K562 (cell line): ENCODE measurements at regions of chr19 and their contacts with region 1.

Region 1: DNA sequence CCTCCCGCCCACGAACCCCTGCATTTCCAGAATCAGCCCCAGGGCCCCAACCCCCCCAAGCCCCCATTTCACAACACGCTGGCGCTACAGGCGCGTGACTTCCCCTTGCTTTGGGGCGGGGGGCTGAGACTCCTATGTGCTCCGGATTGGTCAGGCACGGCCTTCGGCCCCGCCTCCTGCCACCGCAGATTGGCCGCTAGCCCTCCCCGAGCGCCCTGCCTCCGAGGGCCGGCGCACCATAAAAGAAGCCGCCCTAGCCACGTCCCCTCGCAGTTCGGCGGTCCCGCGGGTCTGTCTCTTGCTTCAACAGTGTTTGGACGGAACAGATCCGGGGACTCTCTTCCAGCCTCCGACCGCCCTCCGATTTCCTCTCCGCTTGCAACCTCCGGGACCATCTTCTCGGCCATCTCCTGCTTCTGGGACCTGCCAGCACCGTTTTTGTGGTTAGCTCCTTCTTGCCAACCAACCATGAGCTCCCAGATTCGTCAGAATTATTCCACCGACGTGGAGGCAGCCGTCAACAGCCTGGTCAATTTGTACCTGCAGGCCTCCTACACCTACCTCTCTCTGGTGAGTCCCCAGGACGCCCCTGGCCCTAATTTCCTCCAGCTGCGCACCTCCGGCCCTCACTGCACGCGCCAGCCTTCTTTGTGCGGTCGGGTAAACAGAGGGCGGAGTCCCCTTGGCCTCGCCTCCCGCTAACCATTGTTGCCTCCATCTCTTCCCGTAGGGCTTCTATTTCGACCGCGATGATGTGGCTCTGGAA is at the start of gene FTL:
- DNase-seq: peak; percentile 89 to 99 (median 94)
- ATAC-seq: peak; percentile 72
- H3K4me3 ChIP-seq: peak within 1 kb of the TSS; percentile 70
- H3K27ac ChIP-seq: peak within 1 kb of the TSS; percentile 99
- H3K4me1 ChIP-seq: peaks cover 38 to 66% of the 10 kb centered on the region in 2 experiments
- H3K27me3 ChIP-seq: no peaks in the 10 kb centered on the region
- CTCF ChIP-seq: no peak
- EP300 ChIP-seq: peak; percentile 36; the same call in 1 of the 2 replicates
- POLR2A ChIP-seq: peak; percentile 100
- RAD21 ChIP-seq: peak in 1 of 2 experiments; percentile 21; a peak in 2 of 4 replicates
- polyA plus RNA-seq, gene FTL: 17,458 to 27,415 TPM

Region 2: GRCh38 chr19:48853483-48853882 is 111.7 kb before region 1 on chr19:
- CTCF ChIA-PET with region 1: no interaction called
- POLR2A ChIA-PET with region 1: interaction called, 16 read pairs
- in situ Hi-C with region 1: no loop called
- intact Hi-C with region 1: no loop called
- DNase-seq: no peak
- ATAC-seq: no peak
- H3K4me3 ChIP-seq: no peak overlapping the region
- H3K27ac ChIP-seq: no peak overlapping the region
- H3K4me1 ChIP-seq: peaks cover 21 to 26% of the 10 kb centered on the region in 2 experiments
- H3K27me3 ChIP-seq: no peaks in the 10 kb centered on the region
- CTCF ChIP-seq: no peak
- EP300 ChIP-seq: no peak
- POLR2A ChIP-seq: no peak
- RAD21 ChIP-seq: no peak

Region 3: DNA sequence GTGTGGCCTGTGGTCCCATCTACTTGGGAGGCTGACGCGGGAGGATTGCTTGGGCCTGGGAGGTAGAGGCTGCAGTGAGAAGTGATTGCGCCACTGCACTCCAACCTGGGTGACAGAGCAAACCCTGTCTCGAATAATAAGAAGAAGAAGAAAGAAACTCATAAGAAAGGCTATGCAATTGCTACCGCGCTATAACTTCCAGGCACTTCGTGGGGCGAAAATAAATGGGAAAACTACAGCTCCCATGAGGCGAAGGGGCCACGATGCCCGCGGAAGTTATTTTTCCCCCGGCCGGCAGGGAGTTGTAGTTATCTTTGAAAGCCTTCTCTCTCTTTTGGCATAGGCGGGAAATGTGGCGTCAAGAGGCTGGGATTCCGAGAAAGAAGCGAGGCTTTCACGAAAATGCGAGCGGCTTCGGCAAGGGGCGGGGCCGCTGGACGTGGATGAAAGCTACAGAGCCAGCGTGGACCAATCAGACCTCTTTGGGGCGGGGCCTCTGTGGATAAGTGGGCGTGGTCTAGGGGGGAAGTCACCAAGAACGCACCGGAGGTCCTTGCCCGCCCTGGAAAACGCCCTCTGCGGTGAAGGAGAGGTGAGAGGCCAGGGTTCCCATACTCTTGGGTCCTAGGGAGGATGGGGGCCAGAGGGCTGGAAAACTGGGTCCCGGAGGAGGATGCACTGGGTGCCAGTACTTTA is 65.3 kb before region 1 on chr19 and contains the start of gene NUCB1:
- CTCF ChIA-PET with region 1: interaction called, 3 read pairs
- POLR2A ChIA-PET with region 1: interaction called, 97 read pairs
- in situ Hi-C with region 1: no loop called
- intact Hi-C with region 1: loop called (anchors 2 kb)
- DNase-seq: peak; percentile 98 to 100 (median 98)
- ATAC-seq: peak; percentile 87
- H3K4me3 ChIP-seq: peak within 1 kb of the TSS; percentile 89
- H3K27ac ChIP-seq: peak within 1 kb of the TSS; percentile 77
- H3K4me1 ChIP-seq: peaks cover 27 to 69% of the 10 kb centered on the region in 2 experiments
- H3K27me3 ChIP-seq: no peaks in the 10 kb centered on the region
- CTCF ChIP-seq: peak; percentile 16 to 52 (median 45); a peak in 3 of 6 replicates
- EP300 ChIP-seq: peak; percentile 73
- POLR2A ChIP-seq: peak; percentile 75
- RAD21 ChIP-seq: peak; percentile 26 to 42
- polyA plus RNA-seq, gene NUCB1: 3.1 to 5.3 TPM

Region 4: GRCh38 chr19:48933382-48933932 is 31.8 kb before region 1 on chr19 and contains the start of gene DHDH:
- CTCF ChIA-PET with region 1: no interaction called
- POLR2A ChIA-PET with region 1: interaction called, 32 read pairs
- in situ Hi-C with region 1: no loop called
- intact Hi-C with region 1: loop called (anchors 5 kb)
- DNase-seq: peak; percentile 91 to 96 (median 95)
- ATAC-seq: peak; percentile 97
- H3K4me3 ChIP-seq: peak within 1 kb of the TSS; percentile 38
- H3K27ac ChIP-seq: peak within 1 kb of the TSS; percentile 29; the same call in 2 of the 3 replicates
- H3K4me1 ChIP-seq: peaks cover 14 to 38% of the 10 kb centered on the region in 2 experiments; a peak in 4 of 5 replicates
- H3K27me3 ChIP-seq: no peaks in the 10 kb centered on the region
- CTCF ChIP-seq: no peak
- EP300 ChIP-seq: no peak
- POLR2A ChIP-seq: peak; percentile 63
- RAD21 ChIP-seq: no peak
- polyA plus RNA-seq, gene DHDH: 0.41 to 0.87 TPM

Region 5: DNA sequence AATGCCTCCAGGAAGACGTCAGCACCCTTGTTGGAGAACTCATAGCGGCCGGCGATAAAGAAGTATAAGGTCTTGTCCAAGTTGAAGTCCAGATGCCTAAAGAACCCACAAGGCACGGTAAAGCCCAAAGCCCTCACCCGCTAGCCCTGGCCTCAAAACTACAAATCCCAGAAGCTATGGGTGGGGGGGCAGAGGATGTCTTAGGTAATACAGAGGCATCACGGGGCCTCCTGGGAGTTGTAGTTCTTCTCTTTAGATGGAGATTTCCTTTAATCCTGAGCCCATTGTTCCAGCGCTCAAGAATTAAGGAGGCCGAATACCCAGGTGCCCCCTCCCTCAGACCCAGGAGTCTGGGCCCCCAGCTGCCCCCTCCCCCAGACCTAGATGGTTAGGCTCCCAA is 17.1 kb after region 1 on chr19:
- CTCF ChIA-PET with region 1: interaction called, 6 read pairs
- POLR2A ChIA-PET with region 1: interaction called, 64 read pairs
- in situ Hi-C with region 1: no loop called
- intact Hi-C with region 1: no loop called
- DNase-seq: no peak
- ATAC-seq: no peak
- H3K4me3 ChIP-seq: no peak overlapping the region
- H3K27ac ChIP-seq: no peak overlapping the region
- H3K4me1 ChIP-seq: peaks cover 2 to 4% of the 10 kb centered on the region in 2 experiments; a peak in 2 of 5 replicates
- H3K27me3 ChIP-seq: no peaks in the 10 kb centered on the region
- CTCF ChIP-seq: no peak
- EP300 ChIP-seq: no peak
- POLR2A ChIP-seq: no peak
- RAD21 ChIP-seq: no peak